A673 (cell line): ENCODE measurements at regions of chr2 and their contacts with region 1.

Region 1: GRCh38 chr2:226995625-226996041 is 159.8 kb downstream of the RHBDD1 start:
- DNase-seq: no peak
- H3K4me3 ChIP-seq: no peak overlapping the region
- H3K27ac ChIP-seq: no peak overlapping the region
- H3K4me1 ChIP-seq: peaks cover 13% of the 10 kb centered on the region
- H3K27me3 ChIP-seq: no peaks in the 10 kb centered on the region
- CTCF ChIP-seq: no peak

Region 2: DNA sequence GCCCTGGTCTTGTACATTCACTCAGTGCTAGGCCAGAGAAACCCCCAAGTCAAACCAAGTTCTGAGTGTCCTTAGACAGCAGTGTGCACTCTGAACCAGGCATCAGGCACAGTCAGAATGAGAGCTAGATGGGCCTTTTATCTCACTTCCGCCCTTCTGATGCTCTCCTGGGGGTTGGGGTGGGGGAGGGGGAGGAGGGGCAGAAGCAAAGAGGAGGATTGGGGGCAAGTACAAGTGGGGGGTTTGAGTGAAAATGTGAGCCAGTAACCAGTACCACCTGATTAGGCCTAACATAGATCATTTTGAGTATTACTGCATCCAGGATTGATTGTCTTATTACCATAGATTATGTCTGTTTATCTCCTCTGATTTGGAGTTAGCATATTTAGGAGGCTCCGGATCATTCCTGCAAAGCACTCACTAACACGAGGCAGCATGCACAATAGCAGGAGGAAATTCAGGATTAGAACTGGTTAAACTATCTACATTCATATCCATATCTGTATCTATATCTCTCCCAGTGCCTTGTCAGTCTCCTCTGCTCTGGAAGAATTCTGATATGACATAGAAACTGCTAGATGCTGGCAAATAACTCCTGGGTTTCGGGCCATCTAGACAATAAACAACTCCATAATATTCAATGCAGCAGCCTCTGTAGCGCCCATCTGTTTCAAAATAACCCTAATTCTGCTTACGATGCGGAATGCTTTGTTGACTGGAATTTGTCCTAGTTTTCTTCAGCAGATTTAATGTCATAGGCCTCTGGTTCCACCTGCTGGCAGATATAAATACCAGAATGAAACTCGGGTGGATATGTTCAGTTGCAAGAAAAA is 10.7 kb before region 1 on chr2:
- CTCF ChIA-PET with region 1: interaction called, 16 read pairs
- POLR2A ChIA-PET with region 1: no interaction called
- intact Hi-C with region 1: no loop called
- DNase-seq: peak; percentile 88
- H3K4me3 ChIP-seq: no peak overlapping the region
- H3K27ac ChIP-seq: peak overlapping the region; percentile 52
- H3K4me1 ChIP-seq: peaks cover 14% of the 10 kb centered on the region
- H3K27me3 ChIP-seq: no peaks in the 10 kb centered on the region
- CTCF ChIP-seq: peak; percentile 77